Ovary (tissue), 10 donors: ENCODE measurements at regions of chr20 and their contacts with region 1.

Region 1: DNA sequence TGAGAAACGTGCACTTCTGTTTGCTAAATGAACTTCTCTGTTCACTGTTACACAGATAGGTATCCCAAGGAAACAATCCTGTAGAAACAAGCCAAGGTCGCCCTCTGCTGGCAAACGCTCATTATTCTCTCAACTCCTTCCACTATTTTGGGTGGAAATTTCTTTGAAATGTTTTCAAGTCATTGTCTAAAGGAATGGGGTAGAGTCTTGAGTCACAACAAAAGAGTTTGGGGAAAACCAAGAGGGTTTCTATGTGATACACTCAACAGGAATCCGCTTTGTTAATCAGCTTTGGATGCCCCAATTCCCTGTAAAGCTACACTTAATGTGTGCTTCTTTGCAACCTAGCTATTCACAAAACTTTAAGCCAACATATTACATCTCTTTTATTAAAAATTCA is 4.6 kb upstream of the RAE1 start:
- DNase-seq: peak; percentile 61 to 82 (median 76)
- H3K4me3 ChIP-seq: no peak overlapping the region
- H3K27ac ChIP-seq: no peak overlapping the region
- H3K4me1 ChIP-seq: no peaks in the 10 kb centered on the region
- H3K27me3 ChIP-seq: no peaks in the 10 kb centered on the region
- CTCF ChIP-seq: peak; percentile 39 to 69 (median 42)
- EP300 ChIP-seq: no peak
- POLR2A ChIP-seq: no peak

Region 2: GRCh38 chr20:56554869-56555268 is 791.6 kb before region 1 on chr20:
- intact Hi-C with region 1: loop called in 1 of 4 experiments (anchors 10 kb)
- DNase-seq: peak in 2 of 5 donors; percentile 16 to 18
- H3K4me3 ChIP-seq: no peak overlapping the region
- H3K27ac ChIP-seq: no peak overlapping the region
- H3K4me1 ChIP-seq: peaks cover 2% of the 10 kb centered on the region
- H3K27me3 ChIP-seq: no peaks in the 10 kb centered on the region
- CTCF ChIP-seq: no peak
- EP300 ChIP-seq: no peak
- POLR2A ChIP-seq: no peak

Region 3: GRCh38 chr20:56987989-56988388 is 358.5 kb before region 1 on chr20:
- intact Hi-C with region 1: no loop called
- DNase-seq: no peak
- H3K4me3 ChIP-seq: no peak overlapping the region
- H3K27ac ChIP-seq: no peak overlapping the region
- H3K4me1 ChIP-seq: no peaks in the 10 kb centered on the region
- H3K27me3 ChIP-seq: no peaks in the 10 kb centered on the region
- CTCF ChIP-seq: no peak
- EP300 ChIP-seq: no peak
- POLR2A ChIP-seq: no peak

Region 4: GRCh38 chr20:57089691-57090150 is 256.8 kb before region 1 on chr20:
- intact Hi-C with region 1: loop called in 1 of 4 experiments (anchors 5 kb)
- DNase-seq: peak; percentile 16 to 55 (median 22)
- H3K4me3 ChIP-seq: no peak overlapping the region
- H3K27ac ChIP-seq: no peak overlapping the region
- H3K4me1 ChIP-seq: no peaks in the 10 kb centered on the region
- H3K27me3 ChIP-seq: no peaks in the 10 kb centered on the region
- CTCF ChIP-seq: peak in 1 of 3 donors; percentile 41
- EP300 ChIP-seq: no peak
- POLR2A ChIP-seq: no peak